ENCODE measurements at regions of chr17 and their contacts with region 1.

Region 1: DNA sequence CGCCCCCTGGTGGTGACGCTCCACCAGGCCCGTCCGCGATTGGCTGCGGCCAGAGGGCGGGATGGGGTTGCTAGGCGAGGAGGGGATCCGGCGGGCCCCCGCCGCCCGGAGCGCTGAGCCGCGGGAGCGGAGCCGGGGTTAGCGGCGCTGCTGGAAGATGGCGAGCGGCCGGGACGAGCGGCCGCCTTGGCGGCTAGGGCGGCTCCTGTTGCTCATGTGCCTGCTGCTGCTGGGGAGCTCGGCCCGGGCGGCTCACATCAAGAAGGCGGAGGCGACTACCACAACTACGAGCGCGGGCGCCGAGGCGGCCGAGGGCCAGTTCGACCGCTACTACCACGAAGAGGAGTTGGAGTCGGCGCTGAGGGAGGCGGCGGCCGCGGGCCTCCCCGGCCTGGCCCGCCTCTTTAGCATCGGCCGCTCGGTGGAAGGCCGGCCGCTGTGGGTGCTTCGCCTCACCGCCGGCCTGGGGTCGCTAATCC is at the start of gene CPD:
- DNase-seq: peak; percentile 96
- H3K4me3 Mint-ChIP-seq: peak within 1 kb of the TSS; percentile 70
- H3K27ac Mint-ChIP-seq: peak within 1 kb of the TSS; percentile 70
- H3K4me1 Mint-ChIP-seq: peaks cover 28% of the 10 kb centered on the region
- H3K27me3 Mint-ChIP-seq: no peaks in the 10 kb centered on the region
- CTCF ChIP-seq: no peak
- total RNA-seq, gene CPD: 47.9 and 67.4 TPM in 2 replicates

Region 2: DNA sequence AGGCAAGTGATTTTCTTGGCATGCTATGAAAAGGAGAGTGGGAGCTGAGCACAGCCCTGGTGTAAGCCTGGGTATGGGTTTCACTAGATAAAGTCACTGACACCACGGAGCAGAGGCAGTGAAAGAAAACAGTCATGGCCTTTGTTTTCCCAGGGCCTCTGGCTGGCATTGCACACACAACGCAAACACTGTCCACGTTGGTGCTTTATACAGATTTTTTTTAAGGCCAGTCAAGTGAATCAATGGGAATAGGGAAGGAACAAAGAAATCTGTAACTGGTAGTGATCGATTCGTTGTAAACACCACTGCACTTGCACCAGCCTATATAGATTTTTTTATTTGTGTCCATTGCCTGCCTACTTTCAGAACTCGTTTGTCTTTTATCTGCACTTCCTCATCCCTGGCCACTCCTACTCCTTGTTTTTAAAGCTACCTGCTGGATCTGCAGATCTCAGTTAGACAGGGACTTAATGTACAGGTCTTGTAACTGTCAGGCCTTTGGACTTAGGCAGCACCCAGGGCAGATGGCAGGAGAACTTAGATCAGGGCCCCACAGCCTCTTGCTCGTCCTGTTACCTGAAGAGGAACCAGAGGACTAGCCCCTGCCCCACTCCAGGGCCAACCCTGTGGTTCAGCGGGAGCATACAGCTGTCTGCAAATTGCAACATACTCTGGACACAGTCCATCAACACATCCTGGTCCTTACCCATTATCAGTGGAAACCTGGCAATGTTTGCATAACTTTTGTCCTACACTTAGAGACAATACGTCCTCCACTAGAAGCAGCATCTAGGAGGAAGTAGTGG is 34.4 kb before region 1 on chr17:
- CTCF ChIA-PET with region 1: interaction called, 9 read pairs
- POLR2A ChIA-PET with region 1: interaction called, 24 read pairs
- intact Hi-C with region 1: loop called (anchors 2 kb)
- DNase-seq: peak; percentile 89
- H3K4me3 Mint-ChIP-seq: peak overlapping the region; percentile 17
- H3K27ac Mint-ChIP-seq: peak overlapping the region; percentile 52
- H3K4me1 Mint-ChIP-seq: peaks cover 20% of the 10 kb centered on the region
- H3K27me3 Mint-ChIP-seq: no peaks in the 10 kb centered on the region
- CTCF ChIP-seq: no peak

Region 3: DNA sequence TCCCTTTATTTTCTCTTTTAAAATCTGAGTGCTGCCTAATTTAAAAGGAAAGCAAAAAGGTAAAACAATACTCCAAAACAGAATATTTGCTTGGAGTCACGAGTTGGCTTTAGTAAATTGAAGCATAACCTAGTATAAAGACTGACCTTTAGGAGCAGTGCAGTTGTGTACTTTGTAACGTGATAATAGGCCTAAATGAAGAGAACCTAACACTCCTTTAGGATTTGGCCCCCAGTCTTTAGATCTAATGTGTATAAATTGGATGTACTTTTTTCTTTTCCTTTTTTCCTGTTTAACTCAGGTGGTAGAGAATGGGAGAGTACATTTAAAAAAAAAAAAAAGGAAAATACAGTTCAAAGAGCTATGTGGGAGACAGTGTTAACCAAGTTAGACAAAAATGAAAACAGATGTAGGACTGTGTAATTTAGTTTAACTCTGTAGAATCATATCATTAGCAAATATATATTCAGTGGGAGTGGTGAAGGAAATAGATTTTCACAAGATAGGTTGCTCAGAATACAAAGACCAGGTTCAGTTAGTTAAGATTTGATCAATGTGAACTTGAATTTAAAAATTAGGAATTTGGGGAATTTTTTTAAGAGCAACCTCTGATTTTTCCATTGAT is 16.6 kb after region 1 on chr17:
- CTCF ChIA-PET with region 1: interaction called, 3 read pairs
- POLR2A ChIA-PET with region 1: interaction called, 17 read pairs
- intact Hi-C with region 1: no loop called
- DNase-seq: no peak
- H3K4me3 Mint-ChIP-seq: no peak overlapping the region
- H3K27ac Mint-ChIP-seq: no peak overlapping the region
- H3K4me1 Mint-ChIP-seq: peaks cover 6% of the 10 kb centered on the region
- H3K27me3 Mint-ChIP-seq: no peaks in the 10 kb centered on the region
- CTCF ChIP-seq: no peak

Region 4: GRCh38 chr17:30405161-30405560 is 26.3 kb after region 1 on chr17:
- CTCF ChIA-PET with region 1: no interaction called
- POLR2A ChIA-PET with region 1: interaction called, 10 read pairs
- intact Hi-C with region 1: no loop called
- DNase-seq: no peak
- H3K4me3 Mint-ChIP-seq: no peak overlapping the region
- H3K27ac Mint-ChIP-seq: no peak overlapping the region
- H3K4me1 Mint-ChIP-seq: peaks cover 11% of the 10 kb centered on the region
- H3K27me3 Mint-ChIP-seq: no peaks in the 10 kb centered on the region
- CTCF ChIP-seq: no peak

Measured in MCF 10A (cell line).